ENCODE measurements at regions of chr3 and their contacts with region 1.

Region 1: DNA sequence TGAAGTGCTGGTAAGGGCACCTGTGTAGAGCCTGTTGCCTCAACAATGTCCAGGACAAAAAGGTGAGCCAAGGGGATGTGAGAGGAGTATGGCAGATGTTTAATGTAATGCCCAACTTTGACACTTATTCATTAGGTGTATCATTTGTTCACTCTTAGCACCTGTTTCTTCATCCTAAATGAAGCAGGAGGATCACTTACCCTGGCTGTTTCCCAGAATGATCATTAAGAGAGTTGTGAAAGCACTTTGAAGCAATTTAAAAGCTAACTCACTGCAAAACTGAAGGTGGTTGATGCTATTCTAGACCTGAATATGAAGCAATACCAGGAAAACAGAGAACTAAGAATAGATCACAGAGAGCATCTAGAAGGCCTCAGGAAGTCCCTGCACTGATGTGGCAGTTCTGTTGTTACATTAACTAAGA is 3.4 kb upstream of the HHLA2 start:
- DNase-seq: peak; percentile 45
- H3K4me3 Mint-ChIP-seq: no peak overlapping the region
- H3K27ac Mint-ChIP-seq: peak overlapping the region; percentile 70
- H3K4me1 Mint-ChIP-seq: peaks cover 55% of the 10 kb centered on the region
- H3K27me3 Mint-ChIP-seq: no peaks in the 10 kb centered on the region

Region 2: GRCh38 chr3:107235928-107236315 is 1057.0 kb before region 1 on chr3:
- CTCF ChIA-PET with region 1: no interaction called
- intact Hi-C with region 1: loop called (anchors 5 kb)
- DNase-seq: peak; percentile 68
- H3K4me3 Mint-ChIP-seq: peak overlapping the region; percentile 47
- H3K27ac Mint-ChIP-seq: no peak overlapping the region
- H3K4me1 Mint-ChIP-seq: peaks cover 8% of the 10 kb centered on the region
- H3K27me3 Mint-ChIP-seq: peaks cover 8% of the 10 kb centered on the region

Region 3: GRCh38 chr3:107598926-107599771 is 693.8 kb before region 1 on chr3:
- CTCF ChIA-PET with region 1: no interaction called
- intact Hi-C with region 1: loop called (anchors 10 kb)
- DNase-seq: peak; percentile 61
- H3K4me3 Mint-ChIP-seq: peak overlapping the region; percentile 79
- H3K27ac Mint-ChIP-seq: peak overlapping the region; percentile 85
- H3K4me1 Mint-ChIP-seq: peaks cover 50% of the 10 kb centered on the region
- H3K27me3 Mint-ChIP-seq: no peaks in the 10 kb centered on the region

Region 4: DNA sequence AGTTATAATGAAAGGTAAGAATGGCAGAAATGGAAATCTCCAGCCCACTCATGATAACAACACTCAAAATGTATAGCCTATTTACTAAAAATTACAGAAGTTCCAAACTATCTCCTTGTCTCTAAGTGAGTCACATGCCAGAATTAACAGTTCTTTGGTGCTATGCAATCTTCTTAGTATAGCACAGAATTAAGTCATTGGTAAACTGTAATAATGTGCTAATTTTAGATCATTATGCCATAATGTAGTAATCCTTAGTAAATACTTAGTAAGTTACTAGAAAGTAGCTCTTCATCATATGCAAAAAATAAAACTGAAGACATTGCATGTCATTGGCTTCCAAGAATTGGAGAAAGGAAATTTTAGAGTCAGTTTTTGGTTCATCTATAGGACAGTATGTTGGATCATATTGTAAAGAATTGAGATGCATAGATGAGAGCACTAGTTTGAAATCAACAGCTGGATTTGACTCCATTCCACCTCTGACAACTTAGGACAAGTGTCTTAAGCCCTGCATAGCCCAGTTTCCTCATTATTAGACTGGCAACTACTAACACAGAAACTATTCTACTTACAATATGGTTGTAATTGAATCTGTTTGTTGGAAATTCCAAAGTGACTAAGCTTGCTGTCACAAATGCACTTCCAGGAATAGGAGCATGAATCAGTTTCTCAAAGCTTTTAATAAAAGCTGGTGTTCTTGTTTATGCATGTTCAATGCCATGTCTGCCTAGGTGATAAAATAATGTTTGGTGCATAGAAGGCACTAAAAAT is 162.0 kb before region 1 on chr3:
- CTCF ChIA-PET with region 1: no interaction called
- intact Hi-C with region 1: loop called (anchors 1 kb)
- DNase-seq: no peak
- H3K4me3 Mint-ChIP-seq: peak overlapping the region; percentile 16
- H3K27ac Mint-ChIP-seq: peak overlapping the region; percentile 76
- H3K4me1 Mint-ChIP-seq: peaks cover 85% of the 10 kb centered on the region
- H3K27me3 Mint-ChIP-seq: no peaks in the 10 kb centered on the region

Region 5: GRCh38 chr3:108215871-108216270 is 77.0 kb before region 1 on chr3:
- CTCF ChIA-PET with region 1: no interaction called
- intact Hi-C with region 1: no loop called
- DNase-seq: no peak
- H3K4me3 Mint-ChIP-seq: no peak overlapping the region
- H3K27ac Mint-ChIP-seq: no peak overlapping the region
- H3K4me1 Mint-ChIP-seq: peaks cover 29% of the 10 kb centered on the region
- H3K27me3 Mint-ChIP-seq: no peaks in the 10 kb centered on the region

Region 6: DNA sequence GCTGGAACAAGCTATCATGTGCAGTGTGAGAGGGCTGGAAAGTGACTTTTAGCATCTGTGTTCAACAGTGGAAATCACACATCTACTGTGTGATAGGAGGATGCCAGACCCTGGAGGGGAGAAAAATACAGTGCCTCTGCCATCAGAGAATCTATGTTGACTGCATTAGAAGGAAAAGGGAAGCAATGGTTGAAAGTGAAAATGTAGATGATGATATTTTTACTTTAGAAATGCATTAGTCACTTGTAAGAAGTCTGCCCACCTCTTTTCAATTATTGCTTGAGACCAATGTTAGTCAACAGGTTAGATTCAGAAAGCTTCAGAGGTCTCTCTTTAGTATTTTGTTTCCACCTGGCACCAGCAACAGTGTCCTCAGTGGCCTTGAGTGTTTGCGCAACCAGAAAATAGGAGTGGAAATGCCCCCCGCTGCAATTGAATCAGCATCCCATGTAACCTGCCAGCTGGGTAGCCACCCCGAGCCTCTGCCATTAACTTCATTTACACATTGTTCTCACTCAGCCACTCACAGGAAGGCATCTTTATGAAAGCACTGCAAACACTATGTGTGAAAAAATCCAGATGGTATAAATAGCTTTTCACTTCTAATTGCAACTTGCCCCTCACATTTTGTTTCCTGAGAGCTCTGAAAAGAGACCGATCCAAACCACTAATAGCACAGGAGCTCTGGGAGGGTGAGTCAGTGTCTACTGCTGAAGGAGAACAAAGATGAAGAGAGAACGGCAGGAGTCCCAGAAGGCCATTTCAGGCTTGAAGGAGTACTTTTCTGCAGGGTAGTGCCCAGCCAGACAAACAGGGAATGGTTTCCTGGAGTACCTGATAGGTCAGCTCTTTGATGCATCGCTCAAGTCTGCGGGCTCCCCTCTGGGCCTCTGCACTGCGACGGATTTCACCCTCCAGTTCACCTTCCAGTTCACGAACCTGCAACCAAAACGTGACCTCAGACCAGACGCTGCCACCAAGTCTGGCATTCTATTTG is 95.5 kb after region 1 on chr3:
- CTCF ChIA-PET with region 1: no interaction called
- intact Hi-C with region 1: loop called (anchors 1 kb)
- DNase-seq: peak; percentile 17
- H3K4me3 Mint-ChIP-seq: no peak overlapping the region
- H3K27ac Mint-ChIP-seq: no peak overlapping the region
- H3K4me1 Mint-ChIP-seq: peaks cover 19% of the 10 kb centered on the region
- H3K27me3 Mint-ChIP-seq: peaks cover 14% of the 10 kb centered on the region

Region 7: DNA sequence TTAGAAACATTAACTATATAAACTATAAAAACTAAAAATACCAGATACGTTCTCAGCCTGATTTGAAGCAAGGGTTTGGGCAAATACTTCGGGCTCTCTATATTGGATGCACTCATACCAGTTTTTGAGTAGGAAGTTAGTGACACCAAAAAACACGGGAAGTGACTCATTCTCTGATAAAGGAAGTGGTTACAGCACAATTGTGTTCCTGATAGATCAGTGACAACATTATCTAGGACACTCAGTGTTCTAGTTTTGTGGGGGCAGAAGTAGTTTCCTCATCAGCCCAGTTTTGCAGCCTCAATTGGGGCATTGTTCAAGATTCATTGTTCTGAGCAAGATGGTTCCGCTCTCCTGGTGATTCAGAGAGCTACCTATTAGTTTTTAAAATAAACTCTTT is 1514.0 kb after region 1 on chr3:
- CTCF ChIA-PET with region 1: no interaction called
- intact Hi-C with region 1: loop called (anchors 5 kb)
- DNase-seq: peak; percentile 34
- H3K4me3 Mint-ChIP-seq: no peak overlapping the region
- H3K27ac Mint-ChIP-seq: no peak overlapping the region
- H3K4me1 Mint-ChIP-seq: peaks cover 37% of the 10 kb centered on the region
- H3K27me3 Mint-ChIP-seq: no peaks in the 10 kb centered on the region